PC-9 (cell line): ENCODE measurements at regions of chr12 and their contacts with region 1.

Region 1: GRCh38 chr12:46268590-46269558 is at the start of gene SLC38A1:
- DNase-seq: peak; percentile 89 to 90
- H3K4me3 ChIP-seq: peak within 1 kb of the TSS; percentile 89
- H3K27ac ChIP-seq: peak within 1 kb of the TSS; percentile 98
- H3K4me1 ChIP-seq: peaks cover 34% of the 10 kb centered on the region
- H3K27me3 ChIP-seq: no peaks in the 10 kb centered on the region
- CTCF ChIP-seq: no peak
- total RNA-seq, gene SLC38A1: 77.7 and 131 TPM in 2 replicates

Region 2: GRCh38 chr12:46153268-46153872 is 115.5 kb before region 1 on chr12:
- CTCF ChIA-PET with region 1: no interaction called
- POLR2A ChIA-PET with region 1: no interaction called
- intact Hi-C with region 1: loop called (anchors 5 kb)
- DNase-seq: peak in 1 of 2 experiments; percentile 35
- H3K4me3 ChIP-seq: no peak overlapping the region
- H3K27ac ChIP-seq: no peak overlapping the region
- H3K4me1 ChIP-seq: peaks cover 19% of the 10 kb centered on the region
- H3K27me3 ChIP-seq: no peaks in the 10 kb centered on the region
- CTCF ChIP-seq: peak; percentile 77

Region 3: GRCh38 chr12:46372544-46373110 is 103.8 kb after region 1 on chr12 and contains the start of gene SLC38A2:
- CTCF ChIA-PET with region 1: no interaction called
- POLR2A ChIA-PET with region 1: interaction called, 7 read pairs
- intact Hi-C with region 1: loop called (anchors 5 kb)
- DNase-seq: peak; percentile 70 to 94
- H3K4me3 ChIP-seq: peak within 1 kb of the TSS; percentile 94
- H3K27ac ChIP-seq: peak within 1 kb of the TSS; percentile 97
- H3K4me1 ChIP-seq: peaks cover 43% of the 10 kb centered on the region
- H3K27me3 ChIP-seq: no peaks in the 10 kb centered on the region
- CTCF ChIP-seq: no peak
- total RNA-seq, gene SLC38A2: 193 and 322 TPM in 2 replicates

Region 4: GRCh38 chr12:46450279-46450748 is 181.4 kb after region 1 on chr12:
- CTCF ChIA-PET with region 1: no interaction called
- POLR2A ChIA-PET with region 1: no interaction called
- intact Hi-C with region 1: loop called (anchors 10 kb)
- DNase-seq: no peak
- H3K4me3 ChIP-seq: no peak overlapping the region
- H3K27ac ChIP-seq: no peak overlapping the region
- H3K4me1 ChIP-seq: peaks cover 41% of the 10 kb centered on the region
- H3K27me3 ChIP-seq: no peaks in the 10 kb centered on the region
- CTCF ChIP-seq: no peak

Region 5: DNA sequence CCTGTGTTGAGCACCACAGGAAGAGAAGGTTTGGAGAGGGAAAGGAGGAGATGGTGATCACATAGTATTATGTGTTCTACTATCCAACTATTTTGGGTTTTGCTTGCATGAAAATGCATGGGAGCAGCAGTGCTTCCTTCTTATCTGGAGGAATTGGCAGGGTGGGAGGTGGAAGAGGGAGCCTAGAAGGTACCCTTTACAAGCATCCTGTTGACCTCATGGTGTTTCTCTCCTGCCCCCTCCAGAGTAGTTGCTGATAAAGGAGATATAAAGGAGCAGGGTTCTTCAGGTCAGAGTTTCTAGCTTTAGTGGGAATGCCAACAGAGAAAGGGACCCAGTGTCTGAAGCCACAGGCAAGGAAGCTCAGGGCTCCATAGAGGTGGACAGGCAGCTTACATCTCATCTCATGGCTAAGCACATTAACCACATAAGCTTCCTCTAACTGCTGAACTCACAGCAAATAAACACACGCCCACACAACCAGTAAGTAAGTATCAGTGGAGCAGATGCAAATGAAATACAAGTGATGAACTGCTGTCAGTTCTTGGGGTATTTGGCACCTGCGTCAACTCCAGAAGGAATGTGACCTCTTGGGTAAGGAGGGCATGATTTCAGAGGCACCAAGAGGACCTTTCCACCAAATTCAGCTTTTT is 277.9 kb after region 1 on chr12:
- CTCF ChIA-PET with region 1: no interaction called
- POLR2A ChIA-PET with region 1: no interaction called
- intact Hi-C with region 1: loop called (anchors 5 kb)
- DNase-seq: peak in 1 of 2 experiments; percentile 62
- H3K4me3 ChIP-seq: no peak overlapping the region
- H3K27ac ChIP-seq: peak overlapping the region; percentile 88
- H3K4me1 ChIP-seq: peaks cover 33% of the 10 kb centered on the region
- H3K27me3 ChIP-seq: no peaks in the 10 kb centered on the region
- CTCF ChIP-seq: no peak

Region 6: GRCh38 chr12:47079468-47079980 is 810.6 kb after region 1 on chr12 and contains the starts of genes AMIGO2 and PCED1B:
- CTCF ChIA-PET with region 1: no interaction called
- POLR2A ChIA-PET with region 1: no interaction called
- intact Hi-C with region 1: loop called (anchors 5 kb)
- DNase-seq: peak; percentile 46 to 58
- H3K4me3 ChIP-seq: peak within 1 kb of the TSS; percentile 96
- H3K27ac ChIP-seq: peak within 1 kb of the TSS; percentile 98
- H3K4me1 ChIP-seq: peaks cover 50% of the 10 kb centered on the region
- H3K27me3 ChIP-seq: no peaks in the 10 kb centered on the region
- CTCF ChIP-seq: peak; percentile 26; the same call in 1 of the 2 replicates
- total RNA-seq, gene AMIGO2: 41.9 and 46.3 TPM in 2 replicates
- total RNA-seq, gene PCED1B: 10.9 and 11.2 TPM in 2 replicates

Region 7: GRCh38 chr12:47276621-47277309 is 1007.9 kb after region 1 on chr12:
- CTCF ChIA-PET with region 1: no interaction called
- POLR2A ChIA-PET with region 1: no interaction called
- intact Hi-C with region 1: loop called (anchors 10 kb)
- DNase-seq: peak; percentile 64 to 80
- H3K4me3 ChIP-seq: peak overlapping the region; percentile 1; the same call in 1 of the 2 replicates
- H3K27ac ChIP-seq: peak overlapping the region; percentile 93
- H3K4me1 ChIP-seq: peaks cover 76% of the 10 kb centered on the region
- H3K27me3 ChIP-seq: no peaks in the 10 kb centered on the region
- CTCF ChIP-seq: no peak